Left ventricle myocardium superior (tissue), 1 donor: ENCODE measurements at regions of chr20 and their contacts with region 1.

Region 1: DNA sequence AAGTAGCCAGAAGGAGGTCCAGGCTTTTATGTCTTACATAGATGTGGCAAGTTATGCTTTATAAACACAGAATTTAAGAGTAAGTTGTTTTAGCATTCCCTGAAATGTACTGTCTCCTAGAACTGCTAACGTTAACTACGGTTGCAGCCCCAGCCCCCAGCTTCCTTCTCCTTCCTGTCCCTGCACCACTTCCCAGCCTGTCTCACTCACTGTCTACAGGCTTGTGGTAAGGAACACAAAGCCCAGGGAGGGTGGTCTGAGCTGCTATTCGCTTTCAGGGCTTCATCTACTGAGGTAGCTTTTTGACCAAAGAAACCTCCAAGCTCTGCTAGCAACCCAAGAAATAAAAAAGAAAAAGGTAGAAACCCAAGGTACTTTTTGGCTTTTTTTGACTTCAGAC is 35.9 kb downstream of the PCSK2 start:
- DNase-seq: no peak
- ATAC-seq: no peak

Region 2: GRCh38 chr20:17202673-17203072 is 60.1 kb before region 1 on chr20:
- intact Hi-C with region 1: loop called (anchors 10 kb)
- DNase-seq: no peak
- ATAC-seq: no peak

Region 3: GRCh38 chr20:17223553-17223952 is 39.2 kb before region 1 on chr20:
- intact Hi-C with region 1: loop called (anchors 5 kb)
- DNase-seq: no peak
- ATAC-seq: no peak

Region 4: DNA sequence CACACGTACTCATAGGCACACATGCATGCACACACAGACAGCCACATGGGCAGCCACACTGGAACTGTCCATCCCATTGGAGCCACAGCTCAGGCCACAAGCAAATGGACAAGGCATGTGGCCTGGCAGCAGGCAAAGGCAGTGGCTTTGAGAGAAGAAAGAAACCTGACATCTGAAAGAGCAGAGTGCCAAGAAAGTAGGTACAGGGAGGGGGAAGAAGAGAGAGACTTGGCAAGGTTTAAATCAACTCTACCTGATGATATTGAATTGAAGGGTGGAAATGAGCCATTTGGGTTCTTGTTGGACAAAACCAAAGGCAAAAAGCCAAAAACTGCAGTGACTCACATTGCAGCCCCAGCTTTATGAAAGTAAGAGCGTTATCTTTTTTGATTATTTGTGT is 106.7 kb after region 1 on chr20:
- intact Hi-C with region 1: no loop called
- DNase-seq: no peak
- ATAC-seq: no peak